ENCODE measurements at regions of chr2 and their contacts with region 1.

Region 1: DNA sequence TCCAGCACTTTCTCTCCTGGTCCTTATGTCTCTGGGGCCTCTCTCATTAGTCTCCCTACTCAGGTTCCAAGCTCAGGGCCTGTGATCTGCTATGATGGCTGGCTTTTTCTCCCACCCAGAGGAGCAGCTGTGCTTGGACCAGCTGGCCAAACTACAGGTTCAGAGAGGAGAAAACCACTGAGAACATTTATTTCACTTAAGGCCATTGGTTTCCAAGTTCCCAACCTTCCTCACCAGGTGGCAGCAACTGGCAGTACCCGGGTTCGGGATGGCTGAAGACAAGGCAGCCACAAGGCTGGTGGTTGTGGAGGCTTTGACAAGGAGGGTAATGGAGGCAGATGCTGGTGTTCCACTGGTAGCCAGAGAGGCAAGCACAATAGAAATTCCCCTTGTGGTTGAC is 29.9 kb upstream of the SELENOI start:
- DNase-seq: no peak
- H3K4me3 Mint-ChIP-seq: no peak overlapping the region
- H3K27ac Mint-ChIP-seq: no peak overlapping the region
- H3K4me1 Mint-ChIP-seq: no peaks in the 10 kb centered on the region
- H3K27me3 Mint-ChIP-seq: peaks cover 2% of the 10 kb centered on the region

Region 2: DNA sequence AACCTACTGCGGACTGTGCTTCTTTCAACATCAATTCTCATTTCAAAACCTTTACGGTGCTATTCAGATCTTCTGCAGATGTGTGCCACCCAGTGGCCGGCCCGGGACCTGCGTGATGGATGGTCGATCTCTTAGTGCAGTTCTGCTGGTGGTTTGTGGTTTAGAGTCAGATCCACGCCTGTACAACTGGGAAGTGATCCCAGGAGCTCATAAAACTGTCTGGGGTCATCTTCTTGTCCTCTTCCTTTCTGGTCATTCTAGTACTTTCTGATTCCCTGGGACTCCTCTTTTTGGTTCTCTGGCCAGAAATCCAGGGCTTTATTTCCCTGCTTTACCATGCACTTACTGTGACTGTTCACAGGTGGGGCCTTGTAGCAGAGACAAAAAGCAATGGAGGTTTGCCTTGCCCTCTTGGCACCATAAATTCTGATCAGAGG is 14.1 kb after region 1 on chr2:
- CTCF ChIA-PET with region 1: interaction called, 11 read pairs
- POLR2A ChIA-PET with region 1: no interaction called
- DNase-seq: peak; percentile 90
- H3K4me3 Mint-ChIP-seq: no peak overlapping the region
- H3K27ac Mint-ChIP-seq: peak overlapping the region; percentile 10
- H3K4me1 Mint-ChIP-seq: peaks cover 33% of the 10 kb centered on the region
- H3K27me3 Mint-ChIP-seq: no peaks in the 10 kb centered on the region